Transverse colon (tissue), 4 donors: ENCODE measurements at regions of chr5 and their contacts with region 1.

Region 1: GRCh38 chr5:150272526-150272925 is 17.0 kb downstream of the CAMK2A start:
- DNase-seq: no peak
- H3K4me3 ChIP-seq: no peak overlapping the region
- H3K27ac ChIP-seq: no peak overlapping the region
- H3K4me1 ChIP-seq: no peaks in the 10 kb centered on the region
- H3K27me3 ChIP-seq: peaks cover 13% of the 10 kb centered on the region
- CTCF ChIP-seq: no peak
- EP300 ChIP-seq: no peak
- POLR2A ChIP-seq: no peak

Region 2: DNA sequence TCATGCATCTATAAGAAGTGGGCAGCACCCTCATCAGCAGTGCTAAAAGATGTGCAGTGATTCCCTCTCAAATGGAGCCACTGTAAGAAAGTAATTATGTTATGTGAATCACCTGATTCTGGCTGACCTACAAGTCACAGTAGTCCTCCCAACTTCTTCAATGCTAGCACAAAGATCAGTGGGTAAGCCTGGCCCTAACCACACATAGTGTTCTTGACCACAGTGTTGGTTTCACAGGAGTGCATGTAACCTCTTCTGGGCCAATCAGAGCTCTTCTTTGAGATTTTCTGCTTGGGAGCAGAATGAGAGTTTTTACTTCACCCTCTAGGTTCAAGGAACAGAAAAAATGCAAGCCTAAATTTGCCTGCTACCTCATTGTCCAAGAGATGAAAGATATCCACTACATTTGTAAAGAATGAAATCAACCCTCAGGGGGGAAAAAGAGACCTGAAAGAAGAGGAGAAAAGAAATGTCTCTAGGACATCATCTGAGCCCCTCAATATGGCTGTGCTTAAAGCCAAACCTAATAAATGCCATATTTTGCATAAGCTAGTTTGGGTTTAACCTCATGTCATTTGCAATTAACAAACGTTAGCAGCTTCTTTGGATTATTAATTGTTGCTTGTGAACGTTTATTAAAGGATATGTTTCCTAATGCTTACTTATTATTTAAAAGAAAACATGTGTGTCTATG is 1511.4 kb before region 1 on chr5:
- in situ Hi-C with region 1: no loop called
- intact Hi-C with region 1: loop called (anchors 5 kb)
- DNase-seq: no peak
- H3K4me3 ChIP-seq: no peak overlapping the region
- H3K27ac ChIP-seq: no peak overlapping the region
- H3K4me1 ChIP-seq: no peaks in the 10 kb centered on the region
- H3K27me3 ChIP-seq: no peaks in the 10 kb centered on the region
- CTCF ChIP-seq: no peak
- EP300 ChIP-seq: no peak
- POLR2A ChIP-seq: no peak

Region 3: DNA sequence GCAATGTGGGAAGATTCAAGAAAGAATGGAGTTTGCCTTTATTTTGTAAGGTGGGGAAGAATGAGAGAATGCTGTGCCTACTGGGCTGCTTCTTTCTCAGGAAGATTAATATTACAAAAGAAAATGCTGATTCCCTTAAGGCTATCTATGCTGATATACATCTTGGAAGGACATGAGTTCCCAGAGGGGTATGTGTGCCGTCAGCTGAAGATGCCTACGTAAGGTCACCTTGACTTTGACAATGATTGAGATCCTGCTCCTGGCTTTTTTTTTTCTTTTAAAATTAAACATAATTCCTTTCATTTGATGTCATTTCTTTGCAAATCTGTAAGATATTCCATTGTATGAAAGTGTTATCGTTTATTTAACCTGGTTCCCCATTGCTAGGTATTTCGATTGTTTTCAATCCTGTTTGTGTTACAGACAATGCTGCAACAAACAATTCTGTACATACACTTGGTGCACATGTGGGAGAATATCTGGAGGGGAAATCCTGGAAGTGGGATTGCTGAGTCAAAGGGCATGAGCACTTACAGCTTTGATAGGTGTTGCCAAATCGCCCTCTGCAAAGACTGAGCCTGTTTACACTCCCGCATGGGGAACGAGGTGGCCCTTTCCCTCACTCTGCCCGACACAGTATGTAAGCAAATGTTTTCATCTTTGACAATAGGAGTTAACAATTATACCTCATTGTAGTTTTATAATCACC is 394.3 kb before region 1 on chr5:
- in situ Hi-C with region 1: no loop called
- intact Hi-C with region 1: no loop called
- DNase-seq: peak; percentile 72
- H3K4me3 ChIP-seq: no peak overlapping the region
- H3K27ac ChIP-seq: peak overlapping the region; percentile 63 to 72 (median 68)
- H3K4me1 ChIP-seq: peaks cover 4 to 36% (median 19%) of the 10 kb centered on the region in 4 donors
- H3K27me3 ChIP-seq: no peaks in the 10 kb centered on the region
- CTCF ChIP-seq: no peak
- EP300 ChIP-seq: no peak
- POLR2A ChIP-seq: no peak